Caco-2 (cell line): ENCODE measurements at regions of chr20 and their contacts with region 1.

Region 1: GRCh38 chr20:37066168-37066567 is 29.6 kb downstream of the RBL1 start:
- DNase-seq: no peak
- H3K4me3 ChIP-seq: no peak overlapping the region
- H3K4me3 Mint-ChIP-seq: no peak overlapping the region
- H3K27ac Mint-ChIP-seq: no peak overlapping the region
- H3K4me1 ChIP-seq: no peaks in the 10 kb centered on the region
- H3K4me1 Mint-ChIP-seq: no peaks in the 10 kb centered on the region
- H3K27me3 ChIP-seq: no peaks in the 10 kb centered on the region
- H3K27me3 Mint-ChIP-seq: no peaks in the 10 kb centered on the region
- CTCF ChIP-seq: no peak

Region 2: GRCh38 chr20:37111926-37112455 is 45.8 kb after region 1 on chr20:
- CTCF ChIA-PET with region 1: no interaction called
- POLR2A ChIA-PET with region 1: interaction called, 12 read pairs
- intact Hi-C with region 1: no loop called
- DNase-seq: no peak
- H3K4me3 ChIP-seq: no peak overlapping the region
- H3K4me3 Mint-ChIP-seq: no peak overlapping the region
- H3K27ac Mint-ChIP-seq: no peak overlapping the region
- H3K4me1 ChIP-seq: no peaks in the 10 kb centered on the region
- H3K4me1 Mint-ChIP-seq: no peaks in the 10 kb centered on the region
- H3K27me3 ChIP-seq: no peaks in the 10 kb centered on the region; the same call in none of the 2 replicates
- H3K27me3 Mint-ChIP-seq: no peaks in the 10 kb centered on the region
- CTCF ChIP-seq: no peak

Region 3: GRCh38 chr20:37223053-37223452 is 156.9 kb after region 1 on chr20:
- CTCF ChIA-PET with region 1: no interaction called
- POLR2A ChIA-PET with region 1: no interaction called
- intact Hi-C with region 1: no loop called
- DNase-seq: no peak
- H3K4me3 ChIP-seq: no peak overlapping the region
- H3K4me3 Mint-ChIP-seq: no peak overlapping the region
- H3K27ac Mint-ChIP-seq: peak overlapping the region; percentile 15
- H3K4me1 ChIP-seq: no peaks in the 10 kb centered on the region
- H3K4me1 Mint-ChIP-seq: peaks cover 16% of the 10 kb centered on the region
- H3K27me3 ChIP-seq: no peaks in the 10 kb centered on the region
- H3K27me3 Mint-ChIP-seq: no peaks in the 10 kb centered on the region
- CTCF ChIP-seq: no peak